ENCODE measurements at regions of chr7 and their contacts with region 1.

Region 1: GRCh38 chr7:123865517-123866117 is 20.6 kb downstream of the HYAL4 start:
- DNase-seq: peak in 4 of 5 donors; percentile 42 to 88 (median 63)
- H3K4me3 ChIP-seq: no peak overlapping the region
- H3K27ac ChIP-seq: no peak overlapping the region
- H3K4me1 ChIP-seq: peaks cover 0 to 6% (median 4%) of the 10 kb centered on the region in 3 donors
- H3K27me3 ChIP-seq: no peaks in the 10 kb centered on the region
- CTCF ChIP-seq: peak; percentile 72

Region 2: DNA sequence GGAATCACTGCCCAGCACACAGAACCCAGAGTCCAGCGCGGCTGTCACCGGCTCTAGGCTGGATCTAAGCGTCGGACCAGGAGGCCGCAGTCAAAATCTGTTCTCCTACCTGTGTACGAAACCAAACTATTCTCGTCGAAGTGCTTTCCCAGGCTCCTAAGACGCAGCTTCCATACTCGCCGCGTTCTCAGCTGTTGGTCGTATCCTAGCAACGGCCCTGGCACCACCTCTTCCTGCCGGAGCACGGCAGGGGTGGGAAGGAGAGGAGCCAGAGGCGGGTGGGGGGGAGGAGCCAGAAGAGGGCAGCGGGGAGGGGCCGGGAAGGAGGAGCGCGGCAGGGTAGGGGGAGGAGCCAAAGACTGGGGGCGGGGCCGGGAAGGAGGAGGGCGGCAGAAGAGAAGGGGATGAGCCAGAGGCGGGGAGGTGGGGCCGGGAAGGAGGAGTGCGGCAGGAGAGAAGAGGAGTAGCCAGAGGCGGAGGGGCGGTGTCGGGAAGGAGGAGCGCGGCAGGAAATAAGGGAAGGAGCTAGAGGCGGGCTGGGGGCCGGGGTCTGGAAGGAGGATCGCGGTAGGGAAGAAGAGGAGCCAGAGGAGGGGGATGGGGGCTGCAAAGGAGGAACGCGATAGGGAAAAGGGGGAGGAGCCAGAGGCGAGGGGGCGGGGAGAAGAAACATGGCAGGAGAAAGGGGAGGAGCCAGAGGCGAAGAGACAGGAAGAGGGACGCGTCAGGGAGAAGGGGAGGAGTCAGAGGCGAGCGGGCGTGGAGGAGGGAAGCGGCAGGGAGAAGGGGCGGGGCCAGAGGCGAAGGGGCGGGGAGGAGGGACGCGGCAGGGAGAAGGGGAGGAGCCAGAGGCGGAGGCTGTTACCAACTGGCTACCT is 331.0 kb before region 1 on chr7 and contains the start of gene IQUB:
- intact Hi-C with region 1: no loop called
- DNase-seq: peak; percentile 98 to 99 (median 99)
- H3K4me3 ChIP-seq: peak within 1 kb of the TSS; percentile 83 to 97 (median 87)
- H3K27ac ChIP-seq: peak within 1 kb of the TSS; percentile 91 to 95
- H3K4me1 ChIP-seq: no peaks in the 10 kb centered on the region
- H3K27me3 ChIP-seq: no peaks in the 10 kb centered on the region
- CTCF ChIP-seq: no peak
- total RNA-seq, gene IQUB: 6.9 TPM

Region 3: DNA sequence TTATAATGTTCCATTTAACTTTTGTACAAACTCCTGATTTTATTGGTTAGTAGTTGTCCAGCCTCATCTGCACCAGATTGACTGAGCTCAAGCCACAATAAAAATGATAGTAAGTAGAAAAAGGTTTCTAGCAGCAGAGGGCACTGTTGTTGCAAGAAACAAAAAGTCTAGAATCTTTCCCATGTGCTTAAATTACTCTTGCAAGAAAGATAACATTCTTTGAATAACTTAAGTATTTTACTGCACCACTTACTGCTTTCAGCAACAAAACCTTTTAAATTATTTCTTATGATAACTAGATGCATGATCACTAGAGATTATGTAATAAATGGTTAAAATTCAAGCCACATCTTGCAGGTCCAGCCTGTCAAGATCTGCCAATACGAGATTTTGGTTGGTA is 182.9 kb before region 1 on chr7:
- intact Hi-C with region 1: loop called (anchors 10 kb)
- DNase-seq: peak in 3 of 5 donors; percentile 15 to 85 (median 80)
- H3K4me3 ChIP-seq: no peak overlapping the region
- H3K27ac ChIP-seq: no peak overlapping the region
- H3K4me1 ChIP-seq: peaks cover 0 to 8% (median 2%) of the 10 kb centered on the region in 3 donors
- H3K27me3 ChIP-seq: no peaks in the 10 kb centered on the region
- CTCF ChIP-seq: peak; percentile 47

Region 4: GRCh38 chr7:123748734-123749536 is 116.7 kb before region 1 on chr7 and contains the start of gene WASL:
- intact Hi-C with region 1: no loop called
- DNase-seq: peak; percentile 95 to 97 (median 96)
- H3K4me3 ChIP-seq: peak within 1 kb of the TSS; percentile 91 to 95 (median 93)
- H3K27ac ChIP-seq: peak within 1 kb of the TSS; percentile 96 to 97
- H3K4me1 ChIP-seq: peaks cover 0 to 12% (median 6%) of the 10 kb centered on the region in 3 donors
- H3K27me3 ChIP-seq: no peaks in the 10 kb centered on the region
- CTCF ChIP-seq: no peak
- total RNA-seq, gene WASL: 50.4 TPM

Region 5: DNA sequence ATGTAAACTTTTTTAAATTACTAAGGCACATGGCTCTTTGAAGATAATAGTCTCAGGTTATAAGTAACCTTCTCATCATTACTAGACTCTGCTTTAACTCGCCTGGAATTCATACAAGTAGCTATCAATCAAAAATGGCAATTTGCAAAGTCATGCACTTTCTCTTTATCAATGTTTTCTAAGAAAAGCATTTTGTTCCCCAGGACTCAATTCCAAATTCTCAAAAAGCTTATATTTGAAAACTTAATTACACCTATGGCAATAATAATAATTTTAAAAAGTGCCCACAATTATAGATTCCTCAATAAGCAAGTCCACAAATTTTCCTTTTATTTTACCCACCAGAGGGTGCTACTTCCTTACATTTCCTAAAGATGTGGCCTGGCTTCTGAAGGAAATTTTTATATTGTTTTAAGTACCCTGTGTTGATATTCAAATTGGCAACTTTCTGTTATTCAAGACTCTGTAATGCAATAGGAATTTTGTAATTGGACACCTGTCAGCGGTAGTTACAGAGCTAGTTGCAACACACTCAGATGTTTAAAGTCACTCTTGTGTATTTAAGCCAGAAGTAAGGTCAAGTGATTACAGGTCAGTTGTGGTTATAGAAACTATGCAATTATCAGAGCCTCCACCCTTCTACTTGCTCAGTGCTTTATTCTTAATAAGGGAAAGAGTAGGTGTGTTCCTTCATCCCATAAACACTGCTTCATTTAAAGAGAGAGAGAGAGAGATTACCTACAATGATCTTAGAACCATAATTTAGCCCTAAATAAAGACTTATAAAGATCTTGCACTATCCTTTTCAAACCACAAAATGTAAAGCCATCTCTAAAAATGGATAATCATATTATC is 67.7 kb before region 1 on chr7:
- intact Hi-C with region 1: loop called (anchors 10 kb)
- DNase-seq: peak in 2 of 5 donors; percentile 78 to 83
- H3K4me3 ChIP-seq: no peak overlapping the region
- H3K27ac ChIP-seq: peak overlapping the region; percentile 1 to 23
- H3K4me1 ChIP-seq: no peaks in the 10 kb centered on the region
- H3K27me3 ChIP-seq: no peaks in the 10 kb centered on the region
- CTCF ChIP-seq: peak; percentile 49

Measured in kidney (tissue), 22 donors.